ENCODE measurements at regions of chr1 and their contacts with region 1.

Region 1: GRCh38 chr1:9910425-9911178 is 533 bp upstream of the CTNNBIP1 start:
- DNase-seq: peak; percentile 99 to 100
- H3K4me3 ChIP-seq: peak overlapping the region; percentile 64 to 65
- H3K27ac ChIP-seq: peak overlapping the region; percentile 80 to 92
- H3K4me1 ChIP-seq: peaks cover 5 to 16% of the 10 kb centered on the region in 2 donors
- H3K27me3 ChIP-seq: no peaks in the 10 kb centered on the region
- CTCF ChIP-seq: no peak

Region 2: GRCh38 chr1:9588551-9589143 is 322.0 kb before region 1 on chr1 and contains the start of gene TMEM201:
- intact Hi-C with region 1: loop called (anchors 5 kb)
- DNase-seq: peak; percentile 56 to 96
- H3K4me3 ChIP-seq: peak within 1 kb of the TSS; percentile 77 to 91
- H3K27ac ChIP-seq: peak within 1 kb of the TSS in 1 of 2 donors; percentile 67
- H3K4me1 ChIP-seq: peaks cover 8 to 10% of the 10 kb centered on the region in 2 donors
- H3K27me3 ChIP-seq: no peaks in the 10 kb centered on the region
- CTCF ChIP-seq: peak in 2 of 3 experiments; percentile 63 to 80
- total RNA-seq, gene TMEM201: 12.8 TPM

Region 3: DNA sequence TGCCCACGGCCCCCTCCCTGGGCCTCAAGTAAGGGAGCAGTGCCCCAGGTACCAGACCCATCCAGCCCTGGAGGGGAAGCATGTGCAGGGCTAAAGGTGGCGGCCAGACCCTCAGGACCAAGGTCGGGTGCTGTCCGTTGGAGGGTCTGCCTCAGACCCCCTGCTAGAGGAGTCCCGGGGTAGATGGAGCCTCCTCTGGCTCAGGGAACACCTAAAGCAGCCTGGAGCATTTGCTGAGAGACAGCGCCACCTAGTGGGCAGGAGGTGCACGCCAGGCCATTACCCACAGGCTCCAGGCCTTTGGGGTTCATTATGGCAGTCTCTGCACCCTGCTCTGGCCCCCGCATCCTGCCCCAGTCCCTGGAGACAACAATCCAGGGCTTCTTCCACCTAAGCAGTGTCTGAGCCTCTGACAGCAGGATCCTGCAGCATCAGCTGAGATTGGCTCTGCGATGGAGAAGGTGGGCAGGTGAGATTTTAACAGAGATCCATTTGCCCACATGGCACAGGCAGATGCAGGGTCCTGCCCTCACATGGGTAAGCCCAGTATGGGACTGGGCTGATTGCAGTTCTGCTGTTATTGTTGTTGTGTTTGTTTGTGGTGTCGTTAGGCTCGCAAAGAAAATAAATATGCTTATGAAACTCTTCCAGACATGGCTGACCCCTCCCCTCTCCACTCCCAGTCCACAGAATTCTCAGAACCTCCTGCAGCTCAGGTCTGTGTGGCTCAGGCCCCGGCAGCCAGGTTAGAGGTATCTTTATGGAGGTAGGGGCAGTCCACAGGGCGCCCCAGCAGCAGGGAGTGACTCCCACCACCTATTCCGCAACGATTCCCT is 43.0 kb before region 1 on chr1:
- intact Hi-C with region 1: no loop called
- DNase-seq: peak; percentile 20 to 90
- H3K4me3 ChIP-seq: no peak overlapping the region
- H3K27ac ChIP-seq: no peak overlapping the region
- H3K4me1 ChIP-seq: no peaks in the 10 kb centered on the region
- H3K27me3 ChIP-seq: no peaks in the 10 kb centered on the region
- CTCF ChIP-seq: peak; percentile 93 to 97 (median 94)

Region 4: DNA sequence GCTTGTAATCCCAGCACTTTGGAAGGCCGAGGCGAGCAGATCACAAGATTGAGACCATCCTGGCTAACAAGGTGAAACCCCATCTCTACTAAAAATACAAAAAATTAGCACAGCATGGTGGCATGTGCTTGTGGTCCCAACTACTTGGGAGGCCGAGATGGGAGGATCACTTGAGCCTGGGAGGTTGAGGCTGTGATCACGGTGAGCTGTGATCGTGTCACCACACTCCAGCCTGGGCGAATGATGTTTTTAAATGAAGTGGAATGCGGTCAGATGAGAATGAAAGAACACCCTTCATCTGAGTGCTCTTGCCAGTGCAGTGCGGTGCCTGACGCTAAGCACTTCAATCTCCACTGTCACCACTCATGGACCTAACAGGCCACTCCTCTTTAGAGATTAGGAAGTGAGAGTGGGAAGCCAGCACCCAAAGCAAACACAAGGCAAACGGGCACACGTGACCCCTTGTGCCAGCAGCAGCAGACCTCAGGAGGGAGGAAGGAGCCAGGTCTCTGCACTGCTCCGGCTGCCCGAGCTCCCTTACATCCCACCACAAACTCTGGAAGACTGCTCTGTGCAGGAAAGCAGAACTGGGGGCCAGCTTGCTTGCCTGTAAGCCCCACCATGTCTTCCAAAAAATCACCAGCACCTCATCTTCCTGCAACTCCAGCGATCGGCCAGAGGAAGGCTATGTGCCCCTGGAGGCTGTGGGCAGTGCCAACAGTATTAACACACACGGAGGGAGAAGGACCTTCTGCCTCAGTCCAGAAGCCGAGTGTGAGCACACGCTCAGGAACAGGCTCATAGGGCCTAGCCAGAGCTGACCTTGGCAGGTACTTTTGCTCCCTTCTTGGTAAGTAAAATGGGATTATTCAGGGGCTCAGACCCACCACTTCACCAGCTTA is 10.2 kb before region 1 on chr1:
- intact Hi-C with region 1: loop called (anchors 1 kb)
- DNase-seq: peak; percentile 51 to 81
- H3K4me3 ChIP-seq: peak overlapping the region; percentile 25 to 49
- H3K27ac ChIP-seq: peak overlapping the region; percentile 63 to 70
- H3K4me1 ChIP-seq: peaks cover 12 to 23% of the 10 kb centered on the region in 2 donors
- H3K27me3 ChIP-seq: no peaks in the 10 kb centered on the region
- CTCF ChIP-seq: peak in 2 of 3 experiments; percentile 5 to 12

Region 5: DNA sequence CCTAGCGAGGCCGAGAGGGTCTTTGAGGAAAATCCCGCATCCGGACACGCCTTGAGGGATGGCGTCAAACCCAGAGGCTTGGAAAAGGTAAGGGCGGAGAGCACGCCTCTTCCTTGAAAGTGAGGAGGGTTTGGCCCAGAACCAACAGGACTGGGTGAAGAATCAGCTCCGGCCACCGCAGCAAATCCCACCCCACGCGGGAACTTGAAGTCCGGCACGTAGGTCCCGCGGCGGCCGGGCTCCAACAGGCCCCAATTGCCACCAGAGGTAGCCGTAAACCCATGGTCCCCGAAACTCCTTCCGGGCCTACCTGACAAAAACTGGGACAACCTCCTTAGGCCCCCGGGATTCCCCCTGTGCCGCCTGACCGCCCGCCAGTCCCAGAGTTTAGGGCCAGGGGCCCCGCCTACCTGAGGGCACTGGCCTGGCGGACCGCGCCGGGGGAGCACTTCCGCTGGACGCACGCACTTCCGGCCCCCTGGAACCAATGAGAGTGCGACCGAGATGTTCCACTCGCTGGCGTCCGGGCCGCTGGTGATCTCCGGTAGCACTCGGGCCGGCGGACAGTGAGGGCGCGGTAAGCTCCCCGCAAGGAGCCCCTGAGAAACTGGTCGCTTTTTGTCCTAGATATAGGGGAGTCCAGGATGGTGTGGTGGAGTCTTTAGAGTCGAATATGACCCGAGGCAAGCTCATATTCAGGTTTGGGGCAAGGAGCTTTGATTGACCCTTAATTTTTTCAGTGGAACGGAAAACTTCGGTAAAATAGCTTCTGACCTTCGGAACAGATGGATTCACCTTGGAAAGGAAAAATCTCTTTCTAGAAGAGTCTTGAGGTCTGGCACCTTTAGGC is 32.6 kb after region 1 on chr1 and contains the starts of genes LZIC and NMNAT1:
- intact Hi-C with region 1: loop called (anchors 1 kb)
- DNase-seq: peak; percentile 55 to 96
- H3K4me3 ChIP-seq: peak within 1 kb of the TSS; percentile 88 to 95
- H3K27ac ChIP-seq: peak within 1 kb of the TSS; percentile 84 to 85
- H3K4me1 ChIP-seq: peaks cover 0 to 17% of the 10 kb centered on the region in 2 donors
- H3K27me3 ChIP-seq: no peaks in the 10 kb centered on the region
- CTCF ChIP-seq: peak in 1 of 3 experiments; percentile 12
- total RNA-seq, gene LZIC: 3.7 TPM
- total RNA-seq, gene NMNAT1: 7.9 TPM